Right cardiac atrium (tissue), 5 donors: ENCODE measurements at regions of chr2 and their contacts with region 1.

Region 1: GRCh38 chr2:226963528-226963927 is 127.7 kb downstream of the RHBDD1 start:
- DNase-seq: no peak
- ATAC-seq: no peak
- H3K4me3 ChIP-seq: no peak overlapping the region
- H3K27ac ChIP-seq: no peak overlapping the region
- H3K4me1 ChIP-seq: no peaks in the 10 kb centered on the region
- H3K27me3 ChIP-seq: no peaks in the 10 kb centered on the region

Region 2: DNA sequence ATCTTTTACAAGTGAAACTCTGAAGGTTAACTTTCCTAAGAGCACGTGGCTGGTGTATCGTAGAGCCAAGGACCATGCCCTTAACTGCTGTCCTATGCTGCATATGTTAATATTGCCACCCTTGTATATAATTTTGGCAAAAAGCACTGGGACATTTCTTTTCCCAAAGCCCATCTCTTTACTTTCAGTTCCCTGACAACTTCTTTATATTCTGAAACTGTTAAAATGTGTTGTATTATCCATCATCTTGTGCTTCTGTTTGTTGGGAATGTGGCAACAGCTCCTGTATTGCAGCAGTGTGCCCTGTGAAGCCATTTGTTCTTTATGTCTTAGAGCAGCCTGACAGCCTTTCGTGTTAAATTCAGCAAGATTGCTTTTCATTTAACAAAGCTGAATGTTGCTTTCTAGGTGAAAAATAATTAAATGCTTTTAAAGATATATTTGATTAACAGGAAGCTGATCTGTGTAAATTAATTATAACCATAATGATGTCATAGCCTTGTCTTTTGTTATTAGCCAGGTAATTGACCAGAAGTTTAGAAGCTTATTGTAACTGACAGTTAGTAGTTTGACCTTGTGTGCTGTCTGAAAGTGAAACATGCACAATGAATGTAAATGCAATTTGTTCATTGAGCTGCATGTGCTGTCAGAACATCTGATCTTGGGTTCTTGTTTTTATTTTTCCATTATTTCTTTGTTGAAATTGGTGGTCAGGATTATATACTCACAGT is 118.0 kb before region 1 on chr2:
- intact Hi-C with region 1: loop called in 1 of 4 experiments (anchors 10 kb)
- DNase-seq: no peak
- ATAC-seq: no peak
- H3K4me3 ChIP-seq: no peak overlapping the region
- H3K27ac ChIP-seq: no peak overlapping the region
- H3K4me1 ChIP-seq: no peaks in the 10 kb centered on the region
- H3K27me3 ChIP-seq: no peaks in the 10 kb centered on the region